Body of pancreas (tissue), 4 donors: ENCODE measurements at regions of chr4 and their contacts with region 1.

Region 1: DNA sequence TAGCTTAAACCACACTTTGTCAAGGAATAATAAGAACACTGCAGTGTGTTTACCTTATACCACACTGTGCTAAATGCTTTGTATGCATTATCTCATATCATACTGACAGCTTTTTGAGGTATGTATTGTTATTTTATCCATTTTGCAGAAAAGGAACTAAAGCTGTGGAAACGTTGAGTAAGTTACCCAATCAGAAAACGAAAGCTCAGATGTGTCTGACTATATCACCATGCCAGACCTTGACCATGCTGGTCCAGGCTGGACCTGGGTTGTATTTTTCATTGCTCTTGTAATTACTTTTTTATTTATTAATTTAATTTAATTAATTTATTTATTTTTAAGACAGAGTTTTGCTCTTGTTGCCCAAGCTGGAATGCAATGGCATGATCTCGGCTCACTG is 2.1 kb downstream of the HSD17B11 start:
- DNase-seq: no peak
- ATAC-seq: no peak
- H3K4me3 ChIP-seq: no peak overlapping the region
- H3K27ac ChIP-seq: no peak overlapping the region
- H3K4me1 ChIP-seq: peaks cover 36% of the 10 kb centered on the region
- H3K27me3 ChIP-seq: no peaks in the 10 kb centered on the region
- CTCF ChIP-seq: no peak
- POLR2A ChIP-seq: no peak

Region 2: DNA sequence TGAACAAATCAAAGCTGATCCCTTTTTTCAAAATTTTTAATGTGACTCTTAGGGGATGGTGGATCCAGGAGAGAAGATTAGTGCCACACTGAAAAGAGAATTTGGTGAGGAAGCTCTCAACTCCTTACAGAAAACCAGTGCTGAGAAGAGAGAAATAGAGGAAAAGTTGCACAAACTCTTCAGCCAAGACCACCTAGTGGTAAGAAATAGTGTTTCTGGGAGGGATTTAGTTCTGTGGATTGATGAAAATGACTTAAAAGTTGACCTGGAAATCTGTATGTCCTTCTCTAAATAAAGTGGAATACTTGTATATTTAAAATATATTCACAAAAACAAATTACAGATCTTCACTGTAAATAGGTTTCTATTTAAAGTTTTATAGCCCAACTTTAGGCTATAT is 62.6 kb after region 1 on chr4:
- intact Hi-C with region 1: loop called (anchors 10 kb)
- DNase-seq: no peak
- ATAC-seq: no peak
- H3K4me3 ChIP-seq: no peak overlapping the region
- H3K27ac ChIP-seq: no peak overlapping the region
- H3K4me1 ChIP-seq: peaks cover 6% of the 10 kb centered on the region
- H3K27me3 ChIP-seq: no peaks in the 10 kb centered on the region
- CTCF ChIP-seq: no peak
- POLR2A ChIP-seq: no peak

Region 3: GRCh38 chr4:87697272-87697671 is 308.4 kb after region 1 on chr4:
- intact Hi-C with region 1: no loop called
- DNase-seq: no peak
- ATAC-seq: no peak
- H3K4me3 ChIP-seq: no peak overlapping the region
- H3K27ac ChIP-seq: no peak overlapping the region
- H3K4me1 ChIP-seq: no peaks in the 10 kb centered on the region
- H3K27me3 ChIP-seq: no peaks in the 10 kb centered on the region
- CTCF ChIP-seq: no peak
- POLR2A ChIP-seq: no peak